Activated T-helper 2 cell treated with anti-CD3 and anti-CD28 coated beads, Interferon-gamma antibody, Interleukin-2, Interleukin-4, amounts not matched to agents 10 μg/mL and 5 μg/mL and 100 μg/mL, durations not matched to agents 14 hours and 24 hours and 36 hours (primary cell): ENCODE measurements at regions of chr20 and their contacts with region 1.

Region 1: GRCh38 chr20:4592316-4593148 is 129.2 kb upstream of the PRND start:
- DNase-seq: peak; percentile 42
- H3K4me3 Mint-ChIP-seq: peak overlapping the region; percentile 56
- H3K27ac Mint-ChIP-seq: no peak overlapping the region
- H3K4me1 Mint-ChIP-seq: peaks cover 5% of the 10 kb centered on the region
- H3K27me3 Mint-ChIP-seq: peaks cover 33% of the 10 kb centered on the region

Region 2: DNA sequence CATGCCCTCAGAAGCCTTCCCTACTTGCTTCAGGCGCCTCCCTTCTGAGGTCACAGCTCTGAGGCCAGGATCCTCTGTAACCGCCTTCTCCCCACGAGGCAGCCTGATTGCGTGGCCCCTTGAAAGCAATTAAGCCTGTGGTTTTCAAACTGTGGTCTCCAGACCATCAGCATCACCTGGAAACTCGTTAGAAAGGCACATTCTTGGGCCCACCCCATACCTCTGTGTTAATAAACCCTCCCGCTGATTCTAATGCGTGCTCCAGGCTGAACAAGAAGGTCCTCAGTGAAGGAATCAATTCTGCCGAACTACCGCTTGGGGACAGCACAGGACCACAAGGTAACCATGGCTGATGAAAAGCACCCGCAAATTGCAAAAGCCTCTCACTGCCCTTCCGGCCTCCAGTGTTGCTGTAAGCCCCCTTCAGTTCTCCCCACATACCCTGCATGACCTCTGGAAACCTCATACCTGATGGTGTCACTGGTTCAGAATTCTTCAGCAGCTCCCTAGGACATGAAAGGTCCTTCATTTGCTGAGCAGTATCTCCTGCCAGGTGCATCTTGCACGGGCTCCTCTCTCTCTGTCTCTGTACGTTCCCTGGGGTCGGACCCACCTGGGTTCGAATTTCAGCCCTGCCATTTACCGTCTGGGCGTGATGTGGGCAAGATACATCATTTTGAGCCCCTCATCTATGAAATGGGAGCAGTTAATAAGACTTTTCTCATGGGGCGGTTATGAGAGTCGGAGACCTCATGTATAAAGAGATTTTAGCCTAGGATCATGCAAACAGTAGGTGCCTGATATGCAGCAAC is 483.8 kb before region 1 on chr20:
- intact Hi-C with region 1: loop called (anchors 10 kb)
- DNase-seq: peak; percentile 66
- H3K4me3 Mint-ChIP-seq: no peak overlapping the region
- H3K27ac Mint-ChIP-seq: no peak overlapping the region
- H3K4me1 Mint-ChIP-seq: peaks cover 29% of the 10 kb centered on the region
- H3K27me3 Mint-ChIP-seq: no peaks in the 10 kb centered on the region